ENCODE measurements at regions of chr5 and their contacts with region 1.

Region 1: GRCh38 chr5:14664302-14665100 is at the start of gene OTULIN:
- DNase-seq: peak; percentile 71 to 98
- H3K4me3 ChIP-seq: peak within 1 kb of the TSS; percentile 73
- H3K27ac ChIP-seq: peak within 1 kb of the TSS; percentile 21
- H3K4me1 ChIP-seq: peaks cover 28% of the 10 kb centered on the region
- H3K27me3 ChIP-seq: no peaks in the 10 kb centered on the region
- CTCF ChIP-seq: no peak
- total RNA-seq, gene OTULIN: 77.2 and 79.1 TPM in 2 replicates

Region 2: DNA sequence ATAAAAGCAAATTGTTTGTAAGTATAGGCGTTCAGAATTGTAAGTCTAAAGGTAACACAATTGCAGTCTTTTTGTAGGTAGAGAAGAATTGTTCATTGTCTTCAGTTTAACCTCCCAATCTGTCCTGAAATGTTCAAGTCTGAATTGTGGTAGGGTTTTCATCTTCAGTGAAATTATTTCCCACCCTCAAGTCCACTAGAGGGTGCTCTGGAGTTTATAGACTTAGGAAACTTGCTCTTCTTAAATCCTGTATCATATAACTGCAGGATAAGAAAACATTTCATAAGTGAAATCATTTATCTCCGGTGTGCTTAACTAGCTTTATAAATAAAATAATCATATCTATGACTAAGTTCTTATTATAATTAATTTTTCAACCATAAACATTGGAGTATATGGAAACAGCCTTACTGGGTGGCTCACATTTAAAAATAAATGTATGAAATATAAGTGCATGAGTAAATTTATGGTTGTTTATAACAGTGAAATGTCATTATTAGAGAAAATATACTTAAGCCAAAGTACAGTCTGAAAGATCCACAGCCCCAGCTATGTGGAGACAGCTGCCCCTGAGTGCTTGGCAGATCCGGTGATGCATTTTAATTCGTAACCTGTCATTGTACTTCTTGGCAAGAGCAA is 265.3 kb before region 1 on chr5:
- CTCF ChIA-PET with region 1: no interaction called
- POLR2A ChIA-PET with region 1: interaction called, 11 read pairs
- intact Hi-C with region 1: loop called (anchors 5 kb)
- DNase-seq: peak in 1 of 2 experiments; percentile 46
- H3K4me3 ChIP-seq: no peak overlapping the region
- H3K27ac ChIP-seq: no peak overlapping the region
- H3K4me1 ChIP-seq: peaks cover 10% of the 10 kb centered on the region; the same call in 1 of the 2 replicates
- H3K27me3 ChIP-seq: no peaks in the 10 kb centered on the region
- CTCF ChIP-seq: peak; percentile 83

Region 3: GRCh38 chr5:14581333-14581890 is 83.1 kb before region 1 on chr5 and contains the start of gene OTULINL:
- CTCF ChIA-PET with region 1: no interaction called
- POLR2A ChIA-PET with region 1: no interaction called
- intact Hi-C with region 1: loop called (anchors 1 kb)
- DNase-seq: peak; percentile 48 to 93
- H3K4me3 ChIP-seq: peak within 1 kb of the TSS; percentile 75
- H3K27ac ChIP-seq: no peak within 1 kb of the TSS
- H3K4me1 ChIP-seq: 0 out of 2 replicates have a peak, but pooled peaks cover 6% of the 10 kb centered on the region
- H3K27me3 ChIP-seq: peaks cover 36% of the 10 kb centered on the region
- CTCF ChIP-seq: no peak
- total RNA-seq, gene OTULINL: 4.1 and 7.1 TPM in 2 replicates

Region 4: GRCh38 chr5:14720236-14720971 is 55.9 kb after region 1 on chr5:
- CTCF ChIA-PET with region 1: no interaction called
- POLR2A ChIA-PET with region 1: no interaction called
- intact Hi-C with region 1: no loop called
- DNase-seq: peak; percentile 20 to 41
- H3K4me3 ChIP-seq: no peak overlapping the region
- H3K27ac ChIP-seq: no peak overlapping the region
- H3K4me1 ChIP-seq: no peaks in the 10 kb centered on the region
- H3K27me3 ChIP-seq: no peaks in the 10 kb centered on the region
- CTCF ChIP-seq: no peak

Measured in PC-9 (cell line).